ENCODE measurements at regions of chr15 and their contacts with region 1.

Region 1: GRCh38 chr15:67863442-67863987 is 23.7 kb upstream of the RNU6-1 start:
- DNase-seq: peak; percentile 79
- H3K4me3 Mint-ChIP-seq: peak overlapping the region; percentile 45
- H3K27ac Mint-ChIP-seq: no peak overlapping the region
- H3K4me1 Mint-ChIP-seq: peaks cover 3% of the 10 kb centered on the region
- H3K27me3 Mint-ChIP-seq: peaks cover 11% of the 10 kb centered on the region

Region 2: DNA sequence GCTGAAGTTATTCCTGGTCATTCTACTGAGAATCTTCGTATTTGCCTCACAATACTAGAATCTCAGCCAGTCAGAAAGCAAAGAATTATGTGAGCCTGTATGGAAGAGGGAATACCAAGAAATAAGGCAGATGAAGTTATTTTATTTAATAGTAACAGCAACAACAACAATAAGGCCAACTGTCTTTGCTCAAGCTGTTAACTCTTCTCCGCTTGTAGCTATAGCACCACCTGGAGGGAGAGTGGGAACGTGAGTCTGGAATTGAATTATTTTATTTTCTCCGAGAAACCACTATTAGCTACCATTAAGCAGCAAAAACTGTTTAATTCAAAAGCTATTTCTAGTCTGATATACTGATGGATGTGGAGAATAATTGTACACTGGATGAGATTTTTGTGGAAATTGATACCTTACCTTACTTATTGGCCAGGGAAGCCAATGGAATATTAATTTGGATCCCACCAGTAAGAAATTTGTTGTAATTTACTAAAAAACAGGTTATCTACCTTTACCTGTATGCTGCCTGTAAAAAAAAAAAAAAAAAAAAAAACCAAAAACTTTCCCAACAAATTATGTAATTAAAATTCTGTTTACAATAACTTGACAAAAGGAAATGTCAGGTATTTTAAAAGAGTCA is 291.5 kb after region 1 on chr15:
- CTCF ChIA-PET with region 1: interaction called, 43 read pairs
- POLR2A ChIA-PET with region 1: no interaction called
- intact Hi-C with region 1: loop called (anchors 2 kb)
- DNase-seq: no peak
- H3K4me3 Mint-ChIP-seq: no peak overlapping the region
- H3K27ac Mint-ChIP-seq: no peak overlapping the region
- H3K4me1 Mint-ChIP-seq: no peaks in the 10 kb centered on the region
- H3K27me3 Mint-ChIP-seq: no peaks in the 10 kb centered on the region

Region 3: GRCh38 chr15:68210821-68211655 is 347.5 kb after region 1 on chr15:
- CTCF ChIA-PET with region 1: interaction called, 16 read pairs
- POLR2A ChIA-PET with region 1: no interaction called
- intact Hi-C with region 1: loop called (anchors 2 kb)
- DNase-seq: peak; percentile 64
- H3K4me3 Mint-ChIP-seq: no peak overlapping the region
- H3K27ac Mint-ChIP-seq: no peak overlapping the region
- H3K4me1 Mint-ChIP-seq: peaks cover 23% of the 10 kb centered on the region
- H3K27me3 Mint-ChIP-seq: no peaks in the 10 kb centered on the region

Region 4: GRCh38 chr15:68229386-68230156 is 366.1 kb after region 1 on chr15 and contains the start of gene CLN6:
- CTCF ChIA-PET with region 1: interaction called, 3 read pairs
- POLR2A ChIA-PET with region 1: no interaction called
- intact Hi-C with region 1: loop called (anchors 5 kb)
- DNase-seq: peak; percentile 83
- H3K4me3 Mint-ChIP-seq: peak within 1 kb of the TSS; percentile 84
- H3K27ac Mint-ChIP-seq: peak within 1 kb of the TSS; percentile 72
- H3K4me1 Mint-ChIP-seq: peaks cover 34% of the 10 kb centered on the region
- H3K27me3 Mint-ChIP-seq: no peaks in the 10 kb centered on the region
- total RNA-seq, gene CLN6: 32.9 to 34.2 TPM

Measured in activated CD4-positive, alpha-beta memory T cell treated with anti-CD3 and anti-CD28 coated beads for 36 hours (primary cell).